Panc1 (cell line): ENCODE measurements at regions of chr1 and their contacts with region 1.

Region 1: DNA sequence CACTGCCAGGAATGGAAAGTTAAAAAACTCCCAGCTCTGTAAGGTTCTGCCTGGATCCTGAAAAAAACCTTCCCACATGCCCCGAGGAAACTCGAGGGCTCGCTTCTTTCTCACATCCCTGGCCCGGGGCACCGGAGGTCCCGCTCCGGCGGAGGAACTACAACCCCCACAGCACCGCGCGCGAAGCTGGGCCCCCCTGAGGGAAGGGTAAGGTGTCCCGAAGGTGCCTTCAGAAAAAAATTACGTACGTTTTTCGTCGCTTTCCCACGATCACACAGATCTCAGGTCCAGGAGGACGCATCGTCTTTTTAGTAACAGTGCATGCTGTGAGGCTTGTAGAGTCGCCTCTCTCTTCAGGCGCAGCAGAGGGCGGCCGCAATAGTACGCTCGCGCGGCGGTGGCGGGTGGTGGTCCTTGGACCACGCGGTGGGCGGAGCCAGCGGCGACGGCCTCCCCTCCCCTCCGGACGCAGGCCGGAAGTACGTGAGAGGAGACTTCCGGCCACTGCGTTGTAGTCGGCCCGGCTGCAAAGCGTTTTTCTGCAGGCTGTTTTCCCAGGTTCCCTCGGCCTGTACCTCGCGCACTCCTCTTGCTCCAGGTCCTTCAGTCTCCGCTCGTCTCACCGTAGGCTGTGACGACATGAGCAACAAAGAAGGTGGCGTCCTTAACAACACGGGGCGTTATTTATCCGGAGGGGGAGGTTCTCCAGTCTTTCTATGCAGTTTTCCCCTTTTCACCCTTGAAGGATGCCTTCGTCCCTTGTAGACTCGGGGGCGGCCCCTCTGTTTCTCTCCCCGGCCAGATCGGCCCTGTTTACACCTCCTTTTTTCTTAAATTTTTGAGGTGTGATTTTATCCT is at the start of gene TSNAX:
- DNase-seq: peak; percentile 86
- ATAC-seq: peak; percentile 99
- H3K4me3 ChIP-seq: peak within 1 kb of the TSS; percentile 92 to 96
- H3K27ac ChIP-seq: peak within 1 kb of the TSS; percentile 97
- H3K4me1 ChIP-seq: peaks cover 9% of the 10 kb centered on the region
- H3K27me3 ChIP-seq: no peaks in the 10 kb centered on the region
- CTCF ChIP-seq: no peak
- total RNA-seq, gene TSNAX: 40.0 TPM

Region 2: DNA sequence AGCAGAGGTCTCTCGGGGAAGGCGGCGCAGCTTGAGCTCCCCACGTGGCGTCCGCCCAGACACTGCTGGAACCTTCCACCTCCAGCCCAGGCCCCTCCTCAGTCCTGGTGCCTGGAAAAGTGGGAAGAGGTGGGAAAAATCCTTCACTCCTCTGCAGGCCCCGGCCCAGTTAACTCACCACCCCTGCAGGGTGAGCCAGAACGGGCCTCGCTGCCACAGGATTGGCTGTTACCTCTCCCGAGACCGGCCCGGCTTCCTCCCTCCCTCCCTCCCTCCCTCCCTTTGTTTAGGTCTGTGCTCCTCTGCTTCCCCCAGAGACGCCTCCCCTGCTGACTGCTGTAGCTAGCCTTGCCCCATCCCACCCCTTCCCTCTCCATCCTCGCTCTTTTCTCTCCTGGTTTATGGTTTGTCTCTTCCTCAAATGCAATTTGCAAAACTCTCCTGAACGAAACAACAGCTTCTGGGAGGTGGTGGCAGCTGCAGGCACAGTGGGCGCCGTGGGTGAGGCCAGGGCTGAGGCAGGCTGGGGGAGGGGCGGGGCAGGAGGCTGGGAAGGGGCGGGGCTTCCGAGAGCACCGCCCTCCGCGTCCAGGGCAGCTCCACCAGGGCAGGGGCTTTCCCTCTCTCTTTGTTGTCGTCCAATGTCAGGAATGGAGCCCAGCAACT is 774.7 kb before region 1 on chr1:
- CTCF ChIA-PET with region 1: no interaction called
- POLR2A ChIA-PET with region 1: no interaction called
- in situ Hi-C with region 1: no loop called
- intact Hi-C with region 1: no loop called
- DNase-seq: no peak
- ATAC-seq: peak; percentile 19
- H3K4me3 ChIP-seq: no peak overlapping the region
- H3K27ac ChIP-seq: no peak overlapping the region
- H3K4me1 ChIP-seq: no peaks in the 10 kb centered on the region
- H3K27me3 ChIP-seq: no peaks in the 10 kb centered on the region
- CTCF ChIP-seq: no peak

Region 3: DNA sequence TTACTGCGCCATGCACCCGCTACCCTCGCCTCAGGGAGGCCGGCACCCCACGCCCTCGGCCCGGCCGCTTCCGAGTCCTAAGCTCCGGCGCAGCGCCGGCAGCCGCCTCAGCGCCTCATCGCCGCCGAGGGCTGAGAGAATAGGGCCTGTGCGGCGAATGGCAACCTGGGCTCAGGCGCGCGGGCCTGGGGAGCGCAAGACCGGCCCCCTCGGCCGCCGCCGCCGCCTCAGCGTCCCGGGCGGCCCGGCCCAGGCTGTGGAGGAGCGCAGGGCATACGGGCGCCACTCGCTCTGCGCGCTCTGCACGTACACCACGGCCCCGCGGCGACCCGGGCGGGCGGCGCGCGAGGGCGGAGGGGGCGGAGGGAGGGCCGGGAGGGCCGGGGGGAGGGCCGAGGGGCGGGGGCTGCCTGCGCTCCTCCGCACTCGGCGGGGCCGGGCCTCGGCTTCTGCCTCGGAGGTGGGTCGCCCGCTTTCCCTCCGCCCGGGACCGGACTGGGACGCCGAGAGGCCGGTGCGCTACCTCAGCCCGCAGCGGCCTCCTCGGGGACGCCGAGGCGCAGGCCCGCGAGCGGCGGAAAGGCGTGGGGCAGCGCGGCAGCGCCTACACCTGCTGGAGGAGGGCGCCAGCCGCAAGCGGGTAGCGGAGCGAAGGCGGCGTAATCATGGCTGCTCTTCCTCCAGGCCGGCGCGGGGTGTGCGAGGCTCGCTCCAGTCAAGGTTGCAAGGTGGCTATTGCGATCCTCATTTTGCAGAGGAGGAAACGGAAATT is 106.2 kb before region 1 on chr1 and contains the start of gene EGLN1:
- CTCF ChIA-PET with region 1: interaction called, 8 read pairs
- POLR2A ChIA-PET with region 1: no interaction called
- in situ Hi-C with region 1: no loop called
- intact Hi-C with region 1: loop called (anchors 2 kb)
- DNase-seq: peak; percentile 62
- ATAC-seq: peak; percentile 94
- H3K4me3 ChIP-seq: peak within 1 kb of the TSS; percentile 72 to 79
- H3K27ac ChIP-seq: peak within 1 kb of the TSS; percentile 95
- H3K4me1 ChIP-seq: peaks cover 38% of the 10 kb centered on the region
- H3K27me3 ChIP-seq: no peaks in the 10 kb centered on the region
- CTCF ChIP-seq: peak; percentile 62
- total RNA-seq, gene EGLN1: 29.0 TPM

Region 4: GRCh38 chr1:231544943-231545592 is 16.7 kb after region 1 on chr1:
- CTCF ChIA-PET with region 1: no interaction called
- POLR2A ChIA-PET with region 1: interaction called, 14 read pairs
- in situ Hi-C with region 1: no loop called
- intact Hi-C with region 1: no loop called
- DNase-seq: no peak
- ATAC-seq: no peak
- H3K4me3 ChIP-seq: no peak overlapping the region
- H3K27ac ChIP-seq: no peak overlapping the region
- H3K4me1 ChIP-seq: no peaks in the 10 kb centered on the region
- H3K27me3 ChIP-seq: no peaks in the 10 kb centered on the region
- CTCF ChIP-seq: no peak

Region 5: DNA sequence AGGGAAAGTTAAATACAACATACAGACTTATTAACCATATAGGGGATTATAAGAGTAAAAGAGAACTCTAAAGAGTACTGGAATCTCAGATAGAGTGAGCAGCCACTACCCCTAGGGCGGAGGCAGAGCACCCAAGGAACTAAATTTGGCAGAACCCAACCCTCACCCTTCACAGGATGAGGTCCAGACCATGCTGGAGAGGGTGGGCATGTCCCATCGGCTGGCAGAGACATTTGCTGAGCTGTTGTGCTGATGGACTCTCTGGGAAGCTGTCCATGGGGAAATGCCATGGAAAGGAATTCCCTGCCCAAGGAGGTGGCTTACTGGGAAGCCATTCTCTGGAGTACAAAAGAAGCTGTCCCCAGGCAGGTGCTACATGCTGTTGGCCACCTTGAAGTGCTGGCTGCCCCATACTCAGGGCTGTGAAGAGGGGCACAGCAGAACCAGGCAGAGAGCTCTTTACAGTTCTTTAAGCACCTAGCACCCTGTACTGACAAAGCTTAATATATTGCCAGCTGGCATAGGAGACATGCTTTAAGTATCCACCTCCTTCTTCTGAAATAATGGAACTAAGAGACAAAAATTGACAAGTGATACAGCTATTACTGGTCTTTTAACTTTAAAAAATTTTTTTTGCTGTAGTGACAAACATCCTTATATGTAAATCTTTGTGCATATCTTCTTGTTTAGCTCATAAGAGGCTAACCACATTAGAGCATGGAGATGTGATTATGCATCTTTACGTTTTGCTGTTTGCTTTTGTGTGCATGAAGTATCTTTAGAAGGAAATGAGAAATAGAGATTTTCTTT is 29.7 kb after region 1 on chr1:
- CTCF ChIA-PET with region 1: no interaction called
- POLR2A ChIA-PET with region 1: no interaction called
- in situ Hi-C with region 1: no loop called
- intact Hi-C with region 1: no loop called
- DNase-seq: no peak
- ATAC-seq: no peak
- H3K4me3 ChIP-seq: no peak overlapping the region
- H3K27ac ChIP-seq: no peak overlapping the region
- H3K4me1 ChIP-seq: no peaks in the 10 kb centered on the region
- H3K27me3 ChIP-seq: no peaks in the 10 kb centered on the region
- CTCF ChIP-seq: no peak